Vagina (tissue), 2 donors: ENCODE measurements at regions of chrX and their contacts with region 1.

Region 1: GRCh38 chrX:149286940-149287349 is 218.2 kb downstream of the IDS start:
- DNase-seq: no peak
- H3K4me3 ChIP-seq: no peak overlapping the region
- H3K27ac ChIP-seq: no peak overlapping the region
- H3K4me1 ChIP-seq: no peaks in the 10 kb centered on the region
- H3K27me3 ChIP-seq: no peaks in the 10 kb centered on the region
- CTCF ChIP-seq: peak in 1 of 3 experiments; percentile 22
- POLR2A ChIP-seq: no peak

Region 2: GRCh38 chrX:148947515-148947914 is 339.4 kb before region 1 on chrX:
- intact Hi-C with region 1: no loop called
- DNase-seq: no peak
- H3K4me3 ChIP-seq: no peak overlapping the region
- H3K27ac ChIP-seq: no peak overlapping the region
- H3K4me1 ChIP-seq: no peaks in the 10 kb centered on the region
- H3K27me3 ChIP-seq: no peaks in the 10 kb centered on the region
- CTCF ChIP-seq: no peak
- POLR2A ChIP-seq: no peak

Region 3: GRCh38 chrX:149114001-149114400 is 172.9 kb before region 1 on chrX:
- intact Hi-C with region 1: loop called (anchors 2 kb)
- DNase-seq: no peak
- H3K4me3 ChIP-seq: no peak overlapping the region
- H3K27ac ChIP-seq: no peak overlapping the region
- H3K4me1 ChIP-seq: no peaks in the 10 kb centered on the region
- H3K27me3 ChIP-seq: no peaks in the 10 kb centered on the region
- CTCF ChIP-seq: no peak
- POLR2A ChIP-seq: no peak